HepG2 (cell line): ENCODE measurements at regions of chr2 and their contacts with region 1.

Region 1: GRCh38 chr2:177332041-177332991 is 60.3 kb upstream of the AGPS start:
- DNase-seq: peak; percentile 74
- ATAC-seq: peak; percentile 91
- H3K4me3 ChIP-seq: no peak overlapping the region
- H3K27ac ChIP-seq: peak overlapping the region; percentile 41
- H3K4me1 ChIP-seq: peaks cover 32% of the 10 kb centered on the region
- H3K27me3 ChIP-seq: no peaks in the 10 kb centered on the region
- CTCF ChIP-seq: peak; percentile 87
- EP300 ChIP-seq: peak in 1 of 2 experiments; percentile 11; a peak in 1 of 4 replicates
- POLR2A ChIP-seq: no peak
- RAD21 ChIP-seq: peak; percentile 82

Region 2: GRCh38 chr2:177229448-177230242 is 102.7 kb before region 1 on chr2:
- CTCF ChIA-PET with region 1: no interaction called
- POLR2A ChIA-PET with region 1: no interaction called
- in situ Hi-C with region 1: no loop called
- intact Hi-C with region 1: loop called (anchors 10 kb)
- DNase-seq: no peak
- ATAC-seq: peak; percentile 12
- H3K4me3 ChIP-seq: no peak overlapping the region
- H3K27ac ChIP-seq: no peak overlapping the region
- H3K4me1 ChIP-seq: peaks cover 29% of the 10 kb centered on the region
- H3K27me3 ChIP-seq: no peaks in the 10 kb centered on the region
- CTCF ChIP-seq: no peak
- EP300 ChIP-seq: no peak
- POLR2A ChIP-seq: peak in 1 of 2 experiments; percentile 66; a peak in 2 of 4 replicates
- RAD21 ChIP-seq: no peak

Region 3: GRCh38 chr2:177419274-177419673 is 87.0 kb after region 1 on chr2:
- CTCF ChIA-PET with region 1: interaction called, 95 read pairs
- POLR2A ChIA-PET with region 1: no interaction called
- in situ Hi-C with region 1: loop called (anchors 5 kb)
- intact Hi-C with region 1: loop called (anchors 1 kb)
- DNase-seq: no peak
- ATAC-seq: no peak
- H3K4me3 ChIP-seq: no peak overlapping the region
- H3K27ac ChIP-seq: no peak overlapping the region
- H3K4me1 ChIP-seq: peaks cover 58% of the 10 kb centered on the region
- H3K27me3 ChIP-seq: no peaks in the 10 kb centered on the region
- CTCF ChIP-seq: no peak
- EP300 ChIP-seq: no peak
- POLR2A ChIP-seq: no peak
- RAD21 ChIP-seq: no peak

Region 4: DNA sequence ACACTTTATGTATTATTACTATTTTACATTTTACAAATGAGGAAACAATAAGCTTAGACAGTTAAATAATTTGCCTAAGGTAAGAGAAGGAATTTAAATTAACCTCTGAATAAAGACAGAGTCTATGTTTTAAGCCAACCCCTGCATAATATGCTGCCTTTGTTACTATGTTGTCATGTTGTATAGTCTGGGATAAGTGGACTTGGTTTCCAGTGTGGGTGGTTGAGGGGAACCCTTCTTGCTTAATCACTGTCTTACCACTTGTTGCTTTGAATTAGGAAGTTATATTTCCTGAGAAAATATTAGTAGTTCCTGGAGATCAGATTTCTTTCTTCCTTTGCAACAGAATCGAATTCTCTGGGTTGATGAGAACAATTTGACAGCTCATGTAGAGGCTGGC is 112.9 kb after region 1 on chr2:
- CTCF ChIA-PET with region 1: no interaction called
- POLR2A ChIA-PET with region 1: no interaction called
- in situ Hi-C with region 1: no loop called
- intact Hi-C with region 1: no loop called
- DNase-seq: no peak
- ATAC-seq: no peak
- H3K4me3 ChIP-seq: no peak overlapping the region
- H3K27ac ChIP-seq: no peak overlapping the region
- H3K4me1 ChIP-seq: no peaks in the 10 kb centered on the region
- H3K27me3 ChIP-seq: no peaks in the 10 kb centered on the region
- CTCF ChIP-seq: no peak
- EP300 ChIP-seq: no peak
- POLR2A ChIP-seq: no peak
- RAD21 ChIP-seq: no peak

Region 5: DNA sequence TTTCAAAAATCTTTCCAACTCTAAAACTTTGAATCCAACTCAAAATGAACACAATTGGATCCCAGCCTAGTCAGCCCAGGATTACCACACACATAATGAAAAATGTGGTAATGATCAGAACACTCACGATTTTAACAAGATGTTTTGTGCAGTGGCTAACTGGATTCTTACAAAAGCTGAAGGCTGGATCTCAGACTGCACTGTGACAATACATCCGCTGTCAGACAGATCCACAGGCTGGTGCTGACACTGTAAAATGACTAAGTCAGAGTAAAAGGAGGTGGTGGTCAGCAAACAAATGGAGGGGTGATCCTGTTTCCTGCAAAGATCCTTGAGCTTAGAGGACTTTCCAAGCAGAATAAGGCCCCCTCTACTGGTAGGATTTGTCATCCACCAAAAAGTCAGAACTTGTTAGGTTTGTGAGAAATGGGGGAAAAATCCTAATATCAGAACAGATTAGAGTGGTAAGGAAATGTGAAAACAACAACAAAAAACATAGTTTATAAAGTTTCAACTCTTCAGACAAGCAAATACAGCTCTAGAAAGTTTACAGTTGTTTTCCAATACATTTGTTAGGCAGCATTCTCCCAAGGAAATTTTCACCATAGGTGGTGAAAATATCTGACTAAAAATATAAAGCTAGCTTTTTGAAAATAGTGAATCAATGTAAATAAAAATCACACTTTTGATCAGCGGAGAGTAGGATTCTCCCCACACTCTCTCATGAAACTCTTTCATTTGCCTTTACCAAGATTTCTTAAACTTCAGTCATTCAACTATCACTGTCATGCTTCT is 272.2 kb after region 1 on chr2:
- CTCF ChIA-PET with region 1: interaction called, 5 read pairs
- POLR2A ChIA-PET with region 1: no interaction called
- in situ Hi-C with region 1: loop called (anchors 10 kb)
- intact Hi-C with region 1: loop called (anchors 1 kb)
- DNase-seq: peak; percentile 76
- ATAC-seq: peak; percentile 70
- H3K4me3 ChIP-seq: peak overlapping the region in 1 of 3 experiments; percentile 5; a peak in 2 of 6 replicates
- H3K27ac ChIP-seq: peak overlapping the region; percentile 5
- H3K4me1 ChIP-seq: peaks cover 65% of the 10 kb centered on the region
- H3K27me3 ChIP-seq: no peaks in the 10 kb centered on the region; a peak in 1 of 5 replicates
- CTCF ChIP-seq: peak; percentile 88
- EP300 ChIP-seq: no peak
- POLR2A ChIP-seq: no peak
- RAD21 ChIP-seq: peak; percentile 78; the same call in 1 of the 2 replicates

Region 6: DNA sequence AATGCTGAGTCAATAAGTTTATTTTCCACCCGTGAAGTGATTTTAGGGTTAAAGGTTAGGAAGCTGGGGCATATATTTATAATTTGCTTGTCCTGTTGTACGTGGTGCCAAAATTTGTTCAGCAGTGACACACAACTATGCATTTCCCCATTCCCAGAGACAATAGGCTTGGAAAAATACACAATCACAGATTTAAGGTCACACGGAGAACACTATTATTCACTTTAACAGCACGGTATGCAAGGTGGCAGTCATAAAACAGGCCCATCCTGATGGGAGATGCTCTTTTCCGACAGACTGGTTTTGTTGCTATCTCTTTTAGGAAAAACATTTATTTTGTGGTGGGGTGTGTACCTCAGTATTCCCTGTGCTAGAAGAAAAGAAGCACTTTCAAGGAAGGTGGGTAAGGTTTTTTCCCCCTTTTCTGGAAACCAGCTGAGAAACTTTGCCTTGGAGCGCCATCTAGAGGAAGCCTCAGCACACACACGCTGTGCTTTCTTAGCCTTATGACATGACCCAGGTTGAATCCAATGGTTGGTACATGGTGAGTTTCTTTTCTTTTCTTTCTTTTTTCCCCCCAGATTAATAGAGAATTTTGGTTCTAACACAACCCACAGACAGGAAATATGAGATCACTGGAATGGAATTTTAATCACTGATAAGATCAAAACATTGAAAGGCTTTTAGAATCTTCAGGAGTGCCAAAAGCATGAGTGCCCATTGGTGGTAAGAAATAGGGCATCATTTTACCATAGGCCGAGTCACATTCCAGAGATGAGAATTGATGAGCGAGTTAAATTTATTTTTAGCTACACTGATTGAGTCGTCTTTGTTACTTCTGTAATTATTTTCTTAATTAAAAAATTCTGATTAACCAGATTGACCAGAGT is 392.3 kb after region 1 on chr2:
- CTCF ChIA-PET with region 1: interaction called, 4 read pairs
- POLR2A ChIA-PET with region 1: no interaction called
- in situ Hi-C with region 1: loop called (anchors 5 kb)
- intact Hi-C with region 1: loop called (anchors 1 kb)
- DNase-seq: peak; percentile 47
- ATAC-seq: peak; percentile 94
- H3K4me3 ChIP-seq: no peak overlapping the region
- H3K27ac ChIP-seq: no peak overlapping the region
- H3K4me1 ChIP-seq: peaks cover 11% of the 10 kb centered on the region
- H3K27me3 ChIP-seq: no peaks in the 10 kb centered on the region
- CTCF ChIP-seq: peak; percentile 94
- EP300 ChIP-seq: no peak
- POLR2A ChIP-seq: no peak
- RAD21 ChIP-seq: peak; percentile 82

Region 7: GRCh38 chr2:177758591-177759371 is 426.5 kb after region 1 on chr2:
- CTCF ChIA-PET with region 1: no interaction called
- POLR2A ChIA-PET with region 1: no interaction called
- in situ Hi-C with region 1: no loop called
- intact Hi-C with region 1: loop called (anchors 1 kb)
- DNase-seq: peak; percentile 16
- ATAC-seq: no peak
- H3K4me3 ChIP-seq: no peak overlapping the region
- H3K27ac ChIP-seq: no peak overlapping the region
- H3K4me1 ChIP-seq: peaks cover 5% of the 10 kb centered on the region; the same call in 1 of the 2 replicates
- H3K27me3 ChIP-seq: no peaks in the 10 kb centered on the region
- CTCF ChIP-seq: peak; percentile 66
- EP300 ChIP-seq: no peak
- POLR2A ChIP-seq: no peak
- RAD21 ChIP-seq: peak; percentile 51; the same call in 1 of the 2 replicates